ENCODE measurements at regions of chr2 and their contacts with region 1.

Region 1: DNA sequence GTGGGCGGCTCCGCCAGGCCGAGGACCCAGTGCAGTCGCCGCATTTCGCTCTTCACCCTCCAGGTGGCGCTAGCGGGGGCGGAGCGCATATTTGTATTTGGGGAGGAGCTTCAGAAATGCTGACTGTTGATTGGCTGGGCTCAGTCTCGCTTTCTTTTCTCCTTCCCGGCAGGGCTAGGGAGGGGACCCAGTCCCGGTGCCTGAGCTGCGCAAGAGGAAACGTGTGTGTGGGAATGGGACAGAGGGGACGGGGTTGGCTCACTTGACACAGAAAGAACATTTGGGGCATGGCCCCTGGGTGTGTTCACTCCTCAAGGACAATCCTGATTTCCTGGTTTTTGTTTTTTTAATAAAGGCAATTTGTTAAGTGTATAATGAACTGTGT is 20.3 kb upstream of the DNMT3A start:
- DNase-seq: peak; percentile 93 to 97
- H3K4me3 ChIP-seq: peak overlapping the region; percentile 3; the same call in 1 of the 2 replicates
- H3K4me3 Mint-ChIP-seq: peak overlapping the region; percentile 48
- H3K27ac Mint-ChIP-seq: peak overlapping the region; percentile 19
- H3K4me1 ChIP-seq: no peaks in the 10 kb centered on the region
- H3K4me1 Mint-ChIP-seq: no peaks in the 10 kb centered on the region
- H3K27me3 ChIP-seq: no peaks in the 10 kb centered on the region
- H3K27me3 Mint-ChIP-seq: peaks cover 3% of the 10 kb centered on the region
- CTCF ChIP-seq: peak; percentile 90 to 94

Region 2: DNA sequence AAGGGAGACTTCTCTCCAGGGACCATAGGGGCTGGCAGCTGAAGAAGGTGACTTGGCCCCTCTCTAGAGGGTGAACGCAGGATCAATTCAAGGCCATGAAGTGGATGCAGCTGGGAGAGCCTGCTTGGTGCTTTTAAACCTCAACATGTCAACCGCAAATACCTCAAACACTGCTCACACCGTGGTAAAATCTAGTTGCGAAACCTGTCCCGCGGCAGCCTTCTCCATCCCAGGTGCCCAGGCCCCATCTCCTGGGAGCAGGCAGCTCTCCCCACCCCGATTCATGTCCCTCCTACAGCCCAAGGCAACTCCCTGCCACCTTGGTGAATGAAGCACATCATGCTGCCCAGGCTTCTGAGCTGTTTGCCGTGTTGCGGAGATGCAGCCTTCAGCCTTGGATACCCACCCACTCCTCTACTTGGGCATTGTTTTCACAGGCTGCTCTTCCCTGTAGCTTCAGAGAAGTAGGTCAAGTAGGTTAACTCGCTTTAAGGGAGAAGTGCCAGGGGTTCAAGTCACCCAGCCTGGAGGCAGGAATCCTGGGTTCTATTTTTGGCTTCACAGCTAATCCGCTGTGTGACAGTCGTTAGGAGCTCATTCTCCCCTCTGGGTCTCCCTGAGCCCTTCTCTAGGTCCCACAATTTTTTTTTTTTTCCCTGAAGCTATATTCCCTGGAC is 326.4 kb before region 1 on chr2:
- CTCF ChIA-PET with region 1: no interaction called
- POLR2A ChIA-PET with region 1: interaction called, 15 read pairs
- intact Hi-C with region 1: no loop called
- DNase-seq: no peak
- H3K4me3 ChIP-seq: no peak overlapping the region
- H3K4me3 Mint-ChIP-seq: no peak overlapping the region
- H3K27ac Mint-ChIP-seq: no peak overlapping the region
- H3K4me1 ChIP-seq: no peaks in the 10 kb centered on the region
- H3K4me1 Mint-ChIP-seq: peaks cover 7% of the 10 kb centered on the region
- H3K27me3 ChIP-seq: no peaks in the 10 kb centered on the region
- H3K27me3 Mint-ChIP-seq: no peaks in the 10 kb centered on the region
- CTCF ChIP-seq: no peak

Region 3: DNA sequence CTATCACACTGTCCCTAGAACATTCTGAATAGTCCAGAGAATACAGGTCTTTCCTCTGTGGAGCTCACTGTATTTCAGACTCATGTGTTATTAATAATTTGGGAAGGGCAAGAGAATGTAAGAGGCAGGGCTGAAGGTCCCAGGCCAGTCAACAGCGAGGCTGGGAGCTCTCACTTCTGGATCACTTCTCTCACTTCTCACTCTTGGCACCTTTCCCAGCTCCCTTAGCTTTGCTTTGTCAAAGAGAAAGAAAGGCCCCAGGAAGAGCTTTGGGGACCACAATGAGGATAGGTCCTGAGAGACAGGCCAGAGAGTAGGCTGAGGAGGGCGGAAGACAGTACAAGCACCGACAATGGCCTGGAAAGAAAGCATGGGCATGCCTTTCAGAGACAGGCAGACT is 309.0 kb before region 1 on chr2:
- CTCF ChIA-PET with region 1: no interaction called
- POLR2A ChIA-PET with region 1: no interaction called
- intact Hi-C with region 1: no loop called
- DNase-seq: no peak
- H3K4me3 ChIP-seq: no peak overlapping the region
- H3K4me3 Mint-ChIP-seq: no peak overlapping the region
- H3K27ac Mint-ChIP-seq: no peak overlapping the region
- H3K4me1 ChIP-seq: peaks cover 25% of the 10 kb centered on the region
- H3K4me1 Mint-ChIP-seq: peaks cover 29% of the 10 kb centered on the region
- H3K27me3 ChIP-seq: no peaks in the 10 kb centered on the region
- H3K27me3 Mint-ChIP-seq: no peaks in the 10 kb centered on the region
- CTCF ChIP-seq: no peak

Region 4: GRCh38 chr2:25276569-25277465 is 85.2 kb before region 1 on chr2:
- CTCF ChIA-PET with region 1: interaction called, 10 read pairs
- POLR2A ChIA-PET with region 1: no interaction called
- intact Hi-C with region 1: no loop called
- DNase-seq: no peak
- H3K4me3 ChIP-seq: no peak overlapping the region
- H3K4me3 Mint-ChIP-seq: no peak overlapping the region
- H3K27ac Mint-ChIP-seq: no peak overlapping the region
- H3K4me1 ChIP-seq: no peaks in the 10 kb centered on the region
- H3K4me1 Mint-ChIP-seq: peaks cover 7% of the 10 kb centered on the region
- H3K27me3 ChIP-seq: no peaks in the 10 kb centered on the region
- H3K27me3 Mint-ChIP-seq: no peaks in the 10 kb centered on the region
- CTCF ChIP-seq: peak in 1 of 2 experiments; percentile 40

Region 5: DNA sequence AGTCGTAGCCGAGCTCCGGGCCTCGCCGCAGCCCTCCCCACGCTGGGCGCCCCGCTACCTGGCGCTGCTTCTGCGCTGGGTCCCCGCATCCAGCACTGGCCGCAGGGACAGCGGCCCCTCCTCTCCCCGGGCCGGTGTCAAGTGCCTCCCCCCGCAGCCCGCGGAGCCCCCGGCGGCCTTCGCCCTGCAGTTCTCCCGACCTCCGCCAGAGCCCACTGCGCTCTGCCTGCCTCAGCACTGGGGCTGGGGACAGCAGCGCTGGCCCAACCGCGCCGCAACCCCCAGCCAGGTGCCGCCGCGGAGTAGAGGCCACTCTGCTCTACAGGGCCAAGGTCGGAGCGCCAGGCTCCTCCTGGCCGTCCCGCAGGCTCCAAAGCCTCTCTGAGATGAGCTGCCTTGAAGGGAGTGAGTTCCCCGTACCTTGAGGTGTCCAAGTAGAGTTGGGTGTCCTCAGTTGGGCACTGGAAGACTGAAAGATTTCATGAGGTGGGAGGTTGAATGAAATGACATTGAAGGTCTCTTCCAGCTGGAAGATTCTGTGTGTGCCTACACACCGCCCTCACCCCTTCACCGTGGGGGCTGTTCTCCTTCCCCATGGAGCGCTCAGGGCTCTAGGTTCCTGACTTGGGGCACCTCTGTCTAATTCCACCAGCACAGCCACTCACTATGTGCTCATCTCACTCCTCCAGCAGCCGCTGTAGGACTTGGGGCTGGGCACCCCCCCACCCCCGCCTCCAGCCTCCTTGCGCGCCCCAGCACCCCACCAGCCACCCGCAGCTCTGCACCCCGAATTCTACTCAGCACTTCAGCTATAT is 19.5 kb before region 1 on chr2:
- CTCF ChIA-PET with region 1: interaction called, 20 read pairs
- POLR2A ChIA-PET with region 1: no interaction called
- intact Hi-C with region 1: loop called (anchors 1 kb)
- DNase-seq: peak; percentile 89 to 95
- H3K4me3 ChIP-seq: peak overlapping the region; percentile 37
- H3K4me3 Mint-ChIP-seq: peak overlapping the region; percentile 85
- H3K27ac Mint-ChIP-seq: peak overlapping the region; percentile 45
- H3K4me1 ChIP-seq: 0 out of 2 replicates have a peak, but pooled peaks cover 6% of the 10 kb centered on the region
- H3K4me1 Mint-ChIP-seq: peaks cover 5% of the 10 kb centered on the region
- H3K27me3 ChIP-seq: no peaks in the 10 kb centered on the region
- H3K27me3 Mint-ChIP-seq: no peaks in the 10 kb centered on the region
- CTCF ChIP-seq: peak; percentile 91 to 98

Region 6: DNA sequence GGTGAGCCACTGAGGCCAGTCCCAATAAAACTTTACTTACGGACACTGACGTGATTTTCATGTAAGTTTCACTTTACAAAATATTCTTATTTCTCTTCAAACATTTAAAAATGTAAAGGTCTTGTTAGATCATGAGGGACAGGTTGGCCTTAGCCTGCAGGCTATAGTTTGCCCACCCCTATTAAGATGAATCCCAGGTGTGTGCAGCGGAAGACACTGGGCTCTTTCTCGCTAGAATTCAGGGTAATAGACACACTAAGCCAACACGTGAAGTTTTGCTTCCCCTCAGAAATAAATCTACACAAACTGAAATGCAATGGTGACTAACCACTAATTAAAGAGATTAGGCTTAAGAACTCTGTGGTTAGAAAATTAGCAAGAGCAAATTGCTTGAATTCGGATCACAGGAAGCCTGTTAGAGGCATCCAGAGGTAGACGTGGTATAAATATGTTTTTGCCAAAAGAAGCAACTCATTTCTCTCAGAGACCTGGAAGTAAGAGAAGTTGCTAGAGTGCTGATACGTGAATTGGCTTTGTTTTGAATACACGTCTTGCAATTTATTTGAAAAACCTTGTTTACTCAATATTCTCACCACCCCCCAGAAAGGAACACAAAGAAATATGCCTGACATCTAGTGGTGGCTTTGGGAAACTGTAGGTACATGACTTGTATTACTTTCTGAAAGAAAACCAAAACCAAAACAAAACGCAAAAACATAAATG is 159.8 kb after region 1 on chr2:
- CTCF ChIA-PET with region 1: interaction called, 3 read pairs
- POLR2A ChIA-PET with region 1: no interaction called
- intact Hi-C with region 1: loop called (anchors 5 kb)
- DNase-seq: peak in 1 of 2 experiments; percentile 55
- H3K4me3 ChIP-seq: no peak overlapping the region
- H3K4me3 Mint-ChIP-seq: no peak overlapping the region
- H3K27ac Mint-ChIP-seq: no peak overlapping the region
- H3K4me1 ChIP-seq: peaks cover 6% of the 10 kb centered on the region; the same call in 1 of the 2 replicates
- H3K4me1 Mint-ChIP-seq: peaks cover 7% of the 10 kb centered on the region
- H3K27me3 ChIP-seq: no peaks in the 10 kb centered on the region
- H3K27me3 Mint-ChIP-seq: no peaks in the 10 kb centered on the region
- CTCF ChIP-seq: peak; percentile 81 to 86

Region 7: GRCh38 chr2:25567406-25567805 is 205.4 kb after region 1 on chr2:
- CTCF ChIA-PET with region 1: no interaction called
- POLR2A ChIA-PET with region 1: no interaction called
- intact Hi-C with region 1: loop called (anchors 1 kb)
- DNase-seq: peak in 1 of 2 experiments; percentile 32
- H3K4me3 ChIP-seq: no peak overlapping the region
- H3K4me3 Mint-ChIP-seq: no peak overlapping the region
- H3K27ac Mint-ChIP-seq: no peak overlapping the region
- H3K4me1 ChIP-seq: no peaks in the 10 kb centered on the region
- H3K4me1 Mint-ChIP-seq: no peaks in the 10 kb centered on the region
- H3K27me3 ChIP-seq: no peaks in the 10 kb centered on the region
- H3K27me3 Mint-ChIP-seq: no peaks in the 10 kb centered on the region
- CTCF ChIP-seq: peak; percentile 51 to 52

Region 8: GRCh38 chr2:25726522-25726921 is 364.5 kb after region 1 on chr2:
- CTCF ChIA-PET with region 1: no interaction called
- POLR2A ChIA-PET with region 1: no interaction called
- intact Hi-C with region 1: no loop called
- DNase-seq: no peak
- H3K4me3 ChIP-seq: no peak overlapping the region
- H3K4me3 Mint-ChIP-seq: no peak overlapping the region
- H3K27ac Mint-ChIP-seq: no peak overlapping the region
- H3K4me1 ChIP-seq: no peaks in the 10 kb centered on the region
- H3K4me1 Mint-ChIP-seq: no peaks in the 10 kb centered on the region
- H3K27me3 ChIP-seq: no peaks in the 10 kb centered on the region; the same call in 1 of the 2 replicates
- H3K27me3 Mint-ChIP-seq: no peaks in the 10 kb centered on the region
- CTCF ChIP-seq: no peak